ENCODE measurements at regions of chr3 and their contacts with region 1.

Region 1: DNA sequence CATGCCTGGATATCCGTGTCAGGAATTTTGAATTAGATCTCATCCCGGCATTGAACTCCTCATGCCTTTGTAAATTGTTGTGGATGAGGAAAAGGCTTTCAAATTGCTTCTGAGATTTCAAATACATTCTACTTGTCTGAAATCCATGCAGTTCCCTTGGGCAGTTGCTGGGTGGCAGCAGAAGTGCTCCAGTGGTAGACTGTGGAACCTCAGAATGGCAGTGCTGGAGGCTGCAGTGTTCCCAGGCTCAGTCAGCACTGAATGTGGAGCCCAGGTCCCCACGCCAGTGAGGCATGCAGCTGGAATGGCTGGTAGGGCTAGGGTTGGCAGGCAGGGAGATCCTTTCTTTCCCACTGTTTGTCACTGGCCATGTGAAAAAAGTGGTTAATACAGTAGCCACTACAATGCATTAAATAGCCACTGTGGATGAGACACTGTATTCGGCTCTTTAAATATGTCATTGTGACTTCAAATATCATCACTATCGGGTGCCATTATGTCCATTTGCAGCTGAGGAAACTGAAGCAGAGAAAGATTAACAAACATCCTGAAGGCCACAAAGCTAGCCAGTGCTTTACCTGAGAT is 98.6 kb downstream of the TPRG1 start:
- DNase-seq: peak; percentile 55
- ATAC-seq: peak; percentile 60
- H3K4me3 Mint-ChIP-seq: no peak overlapping the region
- H3K27ac Mint-ChIP-seq: no peak overlapping the region
- H3K4me1 Mint-ChIP-seq: peaks cover 7% of the 10 kb centered on the region
- H3K27me3 Mint-ChIP-seq: no peaks in the 10 kb centered on the region

Region 2: DNA sequence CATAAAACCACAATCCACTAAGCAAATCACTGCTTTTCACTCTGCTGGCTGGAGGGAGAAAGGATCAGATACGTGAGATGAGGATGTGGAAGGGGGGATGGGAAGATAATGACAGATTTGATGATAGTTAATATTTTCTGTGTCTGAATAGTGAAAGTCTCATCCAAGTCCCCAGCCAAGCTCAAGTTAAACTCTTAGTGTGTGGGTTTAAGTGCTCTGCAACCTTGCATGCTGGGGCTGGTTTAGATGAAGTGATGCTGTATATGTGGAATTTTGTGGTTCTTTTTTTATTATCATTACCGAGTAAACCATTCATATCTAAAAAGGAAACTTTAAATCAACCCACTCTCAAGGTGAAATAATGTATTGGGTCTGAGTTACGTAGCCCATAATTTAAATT is 12.4 kb after region 1 on chr3:
- CTCF ChIA-PET with region 1: interaction called, 12 read pairs
- POLR2A ChIA-PET with region 1: no interaction called
- DNase-seq: no peak
- ATAC-seq: no peak
- H3K4me3 Mint-ChIP-seq: no peak overlapping the region
- H3K27ac Mint-ChIP-seq: no peak overlapping the region
- H3K4me1 Mint-ChIP-seq: peaks cover 20% of the 10 kb centered on the region
- H3K27me3 Mint-ChIP-seq: no peaks in the 10 kb centered on the region

Region 3: GRCh38 chr3:189324538-189325138 is 54.3 kb after region 1 on chr3:
- CTCF ChIA-PET with region 1: interaction called, 16 read pairs
- POLR2A ChIA-PET with region 1: no interaction called
- DNase-seq: peak; percentile 95
- ATAC-seq: peak; percentile 99
- H3K4me3 Mint-ChIP-seq: peak overlapping the region; percentile 70
- H3K27ac Mint-ChIP-seq: peak overlapping the region; percentile 98
- H3K4me1 Mint-ChIP-seq: peaks cover 59% of the 10 kb centered on the region
- H3K27me3 Mint-ChIP-seq: no peaks in the 10 kb centered on the region

Region 4: GRCh38 chr3:189334064-189334920 is 64.0 kb after region 1 on chr3:
- CTCF ChIA-PET with region 1: interaction called, 10 read pairs
- POLR2A ChIA-PET with region 1: no interaction called
- DNase-seq: no peak
- ATAC-seq: peak; percentile 24
- H3K4me3 Mint-ChIP-seq: no peak overlapping the region
- H3K27ac Mint-ChIP-seq: no peak overlapping the region
- H3K4me1 Mint-ChIP-seq: peaks cover 47% of the 10 kb centered on the region
- H3K27me3 Mint-ChIP-seq: no peaks in the 10 kb centered on the region

Region 5: GRCh38 chr3:189355481-189356201 is 85.3 kb after region 1 on chr3:
- CTCF ChIA-PET with region 1: interaction called, 22 read pairs
- POLR2A ChIA-PET with region 1: no interaction called
- DNase-seq: peak; percentile 56
- ATAC-seq: peak; percentile 88
- H3K4me3 Mint-ChIP-seq: peak overlapping the region; percentile 55
- H3K27ac Mint-ChIP-seq: peak overlapping the region; percentile 82
- H3K4me1 Mint-ChIP-seq: peaks cover 20% of the 10 kb centered on the region
- H3K27me3 Mint-ChIP-seq: no peaks in the 10 kb centered on the region

Region 6: DNA sequence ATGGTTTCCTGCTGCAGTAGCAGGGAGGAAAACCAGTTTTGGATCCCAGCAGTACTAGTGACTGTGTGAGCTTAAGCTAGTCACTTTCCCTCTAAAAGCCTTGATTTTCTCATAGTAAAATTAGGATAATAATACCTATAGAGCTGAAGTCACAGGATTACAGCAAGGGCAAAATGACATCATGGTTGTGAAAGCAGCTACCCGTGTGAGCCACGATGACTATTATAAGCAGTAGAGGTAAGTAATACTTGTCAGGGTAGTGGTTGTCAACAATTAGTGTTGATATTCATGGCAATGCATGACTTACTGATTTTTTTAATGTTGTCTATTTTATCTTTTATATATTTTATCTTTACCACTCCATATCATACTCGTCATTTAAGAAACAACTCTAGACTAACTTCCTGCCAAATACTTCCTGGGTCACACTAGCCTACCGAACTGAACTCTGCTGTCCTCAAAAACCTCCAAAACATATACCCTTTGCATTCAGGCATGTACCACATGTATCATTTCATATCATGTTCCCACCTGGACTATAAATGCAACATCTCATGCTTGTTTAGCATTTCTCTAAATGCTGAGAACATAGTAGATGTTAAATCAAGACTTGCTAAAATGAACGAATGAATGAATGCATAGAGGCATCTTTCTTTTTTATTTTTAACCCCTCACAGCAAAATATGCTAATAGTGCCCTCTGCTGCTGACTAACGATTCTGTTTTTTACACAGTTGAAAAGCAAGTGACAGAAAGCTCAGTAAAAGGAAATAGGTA is 677.8 kb after region 1 on chr3:
- CTCF ChIA-PET with region 1: interaction called, 41 read pairs
- POLR2A ChIA-PET with region 1: interaction called, 3 read pairs
- DNase-seq: no peak
- ATAC-seq: no peak
- H3K4me3 Mint-ChIP-seq: no peak overlapping the region
- H3K27ac Mint-ChIP-seq: no peak overlapping the region
- H3K4me1 Mint-ChIP-seq: peaks cover 2% of the 10 kb centered on the region
- H3K27me3 Mint-ChIP-seq: peaks cover 3% of the 10 kb centered on the region

Measured in activated CD8-positive, alpha-beta T cell treated with anti-CD3 and anti-CD28 coated beads, Interleukin-2, amount 10 ng/mL, durations not matched to agents 7 days and 5 days (primary cell).